MCF 10A (cell line): ENCODE measurements at regions of chr10 and their contacts with region 1.

Region 1: DNA sequence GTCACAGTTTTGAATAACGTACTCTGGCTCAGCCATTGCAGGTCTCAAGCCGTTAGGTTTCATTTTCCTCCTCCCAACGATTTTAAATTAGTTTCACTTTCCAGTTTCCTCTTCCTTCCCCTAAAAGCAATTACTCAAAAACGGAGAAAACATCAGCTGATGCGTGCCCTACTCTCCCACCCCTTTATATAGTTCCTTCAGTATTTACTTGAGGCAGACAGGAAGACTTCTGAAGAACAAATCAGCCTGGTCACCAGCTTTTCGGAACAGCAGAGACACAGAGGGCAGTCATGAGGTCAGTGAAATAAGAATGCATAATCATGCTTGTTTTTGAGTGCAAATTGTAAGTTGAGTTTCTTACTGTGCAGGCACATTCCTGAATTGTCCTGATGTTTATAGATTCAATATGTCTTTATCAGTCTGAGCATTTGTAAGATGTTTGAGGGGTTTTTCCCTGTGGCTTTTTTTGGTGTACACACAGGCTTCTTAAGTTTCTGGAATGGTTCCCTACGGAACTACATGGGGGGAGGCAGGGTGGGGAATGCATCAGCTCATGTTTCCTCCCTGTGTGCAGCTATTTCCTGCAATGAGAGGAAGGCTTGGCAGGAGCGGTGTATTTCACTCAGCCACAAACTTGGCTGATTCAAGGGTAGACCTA is at the start of gene IFIT3:
- DNase-seq: peak; percentile 87
- H3K4me3 Mint-ChIP-seq: peak within 1 kb of the TSS; percentile 74
- H3K27ac Mint-ChIP-seq: peak within 1 kb of the TSS; percentile 95
- H3K4me1 Mint-ChIP-seq: peaks cover 19% of the 10 kb centered on the region
- H3K27me3 Mint-ChIP-seq: no peaks in the 10 kb centered on the region
- CTCF ChIP-seq: no peak
- total RNA-seq, gene IFIT3: 1.4 and 3.6 TPM in 2 replicates

Region 2: GRCh38 chr10:89342206-89342958 is 14.5 kb after region 1 on chr10:
- CTCF ChIA-PET with region 1: no interaction called
- POLR2A ChIA-PET with region 1: interaction called, 21 read pairs
- intact Hi-C with region 1: no loop called
- DNase-seq: peak; percentile 81
- H3K4me3 Mint-ChIP-seq: no peak overlapping the region
- H3K27ac Mint-ChIP-seq: no peak overlapping the region
- H3K4me1 Mint-ChIP-seq: peaks cover 36% of the 10 kb centered on the region
- H3K27me3 Mint-ChIP-seq: no peaks in the 10 kb centered on the region
- CTCF ChIP-seq: no peak

Region 3: GRCh38 chr10:89351780-89352597 is 24.1 kb after region 1 on chr10:
- CTCF ChIA-PET with region 1: no interaction called
- POLR2A ChIA-PET with region 1: interaction called, 12 read pairs
- intact Hi-C with region 1: no loop called
- DNase-seq: peak; percentile 82
- H3K4me3 Mint-ChIP-seq: peak overlapping the region; percentile 66
- H3K27ac Mint-ChIP-seq: peak overlapping the region; percentile 98
- H3K4me1 Mint-ChIP-seq: peaks cover 30% of the 10 kb centered on the region
- H3K27me3 Mint-ChIP-seq: no peaks in the 10 kb centered on the region
- CTCF ChIP-seq: no peak